SK-N-SH (cell line): ENCODE measurements at regions of chr2 and their contacts with region 1.

Region 1: DNA sequence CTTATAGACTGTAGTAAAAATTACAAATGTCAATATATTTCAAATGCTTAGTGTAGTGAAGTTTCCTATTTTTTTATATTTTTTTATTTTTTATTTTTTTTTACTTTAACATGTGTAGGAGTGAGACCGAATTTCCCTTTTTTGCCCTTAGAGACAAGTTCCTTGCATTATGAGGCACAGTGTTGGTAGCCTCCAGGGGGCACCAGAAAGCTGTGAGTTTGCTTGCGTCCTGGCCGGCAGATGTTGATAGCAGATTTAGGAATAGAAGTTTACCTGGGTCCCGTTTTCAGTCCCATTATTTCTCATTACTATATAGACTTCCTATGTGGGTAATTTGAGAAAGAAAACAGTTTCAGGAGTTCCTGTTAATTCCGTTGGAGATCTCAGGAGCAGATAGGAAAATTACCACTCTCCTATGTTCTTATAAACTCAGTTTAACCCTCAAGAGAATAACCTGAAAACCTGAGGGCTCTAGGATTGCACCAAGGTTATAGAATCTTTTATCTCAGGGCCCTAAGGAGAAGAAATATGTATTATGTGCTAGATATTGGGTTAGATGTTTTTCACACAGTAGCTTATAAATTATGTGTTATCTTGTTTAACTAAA is 157.5 kb upstream of the SESTD1 start:
- DNase-seq: peak; percentile 40
- H3K4me3 ChIP-seq: no peak overlapping the region
- H3K27ac ChIP-seq: no peak overlapping the region
- H3K4me1 ChIP-seq: no peaks in the 10 kb centered on the region
- H3K27me3 ChIP-seq: no peaks in the 10 kb centered on the region
- CTCF ChIP-seq: peak; percentile 79
- EP300 ChIP-seq: no peak
- RAD21 ChIP-seq: peak; percentile 90

Region 2: DNA sequence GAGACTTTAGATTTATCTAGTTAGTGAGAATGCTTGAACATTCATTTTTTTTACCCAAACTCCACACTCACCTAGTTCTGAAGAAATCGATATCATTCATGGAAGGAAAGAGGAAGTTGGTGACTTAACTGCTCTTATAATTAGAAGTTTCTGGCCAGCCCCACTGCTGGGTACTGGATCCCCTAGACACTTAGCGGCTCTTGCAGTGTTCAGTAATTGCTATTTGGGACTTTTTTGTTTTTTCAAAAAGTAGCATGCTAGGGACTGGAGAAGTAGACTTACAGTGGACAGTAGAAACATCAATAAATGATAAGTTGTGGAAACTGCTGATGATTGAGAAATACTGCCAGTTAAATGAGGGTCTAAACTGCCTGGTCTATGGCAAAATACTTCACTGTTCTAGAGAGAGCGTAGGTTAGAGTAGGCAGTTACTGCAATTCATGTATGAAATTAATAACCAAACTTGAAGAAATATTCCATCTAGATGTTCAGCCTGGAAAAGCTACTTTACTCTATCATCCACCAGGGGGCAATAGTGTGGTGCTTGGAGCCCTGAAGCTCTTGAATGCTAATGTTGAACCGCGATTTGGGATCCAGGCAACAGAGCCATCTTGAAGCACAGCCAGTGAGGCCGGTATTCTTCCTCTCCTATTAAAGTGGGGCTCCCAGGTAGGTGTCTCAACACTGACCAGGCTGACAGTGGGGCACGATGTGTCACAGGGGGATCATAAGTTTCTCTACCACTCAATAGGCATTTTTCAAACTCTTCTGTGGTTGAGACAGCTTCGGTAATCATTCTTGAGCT is 11.4 kb before region 1 on chr2:
- CTCF ChIA-PET with region 1: interaction called, 18 read pairs
- POLR2A ChIA-PET with region 1: no interaction called
- DNase-seq: peak; percentile 48
- H3K4me3 ChIP-seq: peak overlapping the region in 1 of 2 experiments; percentile 25; a peak in 1 of 4 replicates
- H3K27ac ChIP-seq: no peak overlapping the region
- H3K4me1 ChIP-seq: no peaks in the 10 kb centered on the region; a peak in 1 of 4 replicates
- H3K27me3 ChIP-seq: no peaks in the 10 kb centered on the region
- CTCF ChIP-seq: peak; percentile 85
- EP300 ChIP-seq: no peak
- RAD21 ChIP-seq: peak; percentile 79

Region 3: DNA sequence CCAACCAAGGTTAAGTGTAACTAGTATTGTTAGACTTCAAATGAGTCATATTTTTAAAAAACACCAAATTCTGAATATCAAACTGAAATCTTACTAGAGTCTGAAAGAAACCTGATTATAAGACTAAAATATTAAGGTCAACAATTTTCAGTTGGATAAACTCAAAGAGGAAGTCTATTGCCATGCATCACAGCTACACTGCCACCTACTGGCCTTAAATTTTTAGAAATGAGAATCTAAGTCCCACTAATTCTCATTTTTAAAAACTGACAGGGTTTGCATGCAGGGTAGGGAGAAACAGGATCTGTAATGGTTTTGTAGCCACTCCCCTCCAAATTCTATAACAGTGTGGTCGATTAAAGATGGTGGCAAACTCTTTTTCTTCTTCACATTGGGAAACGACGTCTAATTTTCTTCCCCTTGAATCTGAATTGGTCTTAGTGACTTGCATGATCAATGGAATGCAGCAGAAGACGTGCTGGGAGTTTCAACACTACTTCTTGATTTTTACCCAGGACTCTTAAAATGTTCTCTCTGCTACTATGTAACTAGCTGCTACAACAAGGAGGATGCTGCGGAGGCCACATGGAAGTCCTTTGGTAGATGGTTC is 18.6 kb after region 1 on chr2:
- CTCF ChIA-PET with region 1: interaction called, 17 read pairs
- POLR2A ChIA-PET with region 1: no interaction called
- DNase-seq: peak; percentile 25
- H3K4me3 ChIP-seq: no peak overlapping the region; a peak in 1 of 4 replicates
- H3K27ac ChIP-seq: no peak overlapping the region
- H3K4me1 ChIP-seq: no peaks in the 10 kb centered on the region; a peak in 1 of 4 replicates
- H3K27me3 ChIP-seq: no peaks in the 10 kb centered on the region
- CTCF ChIP-seq: peak; percentile 64
- EP300 ChIP-seq: no peak
- RAD21 ChIP-seq: peak; percentile 55

Region 4: DNA sequence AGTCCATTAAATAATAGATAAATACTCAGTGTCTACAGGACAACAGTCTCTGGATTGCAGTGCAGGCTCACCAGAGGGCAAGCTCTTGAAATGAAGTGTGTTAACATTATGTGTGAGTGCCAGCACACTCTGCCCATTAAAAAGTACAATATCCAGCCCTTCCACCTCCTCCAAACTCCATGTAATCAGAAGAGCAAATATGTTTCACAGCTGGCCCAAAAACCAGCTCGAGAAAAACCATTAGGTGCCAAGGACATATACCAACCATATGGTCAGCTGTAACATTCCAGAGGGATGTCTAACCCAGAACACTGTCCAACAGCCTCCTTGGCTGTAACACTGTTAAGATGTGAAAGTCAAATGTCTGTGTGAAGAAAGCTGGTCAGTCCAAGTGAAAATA is 327.1 kb after region 1 on chr2:
- CTCF ChIA-PET with region 1: interaction called, 11 read pairs
- POLR2A ChIA-PET with region 1: no interaction called
- DNase-seq: no peak
- H3K4me3 ChIP-seq: no peak overlapping the region
- H3K27ac ChIP-seq: no peak overlapping the region
- H3K4me1 ChIP-seq: no peaks in the 10 kb centered on the region
- H3K27me3 ChIP-seq: no peaks in the 10 kb centered on the region
- CTCF ChIP-seq: no peak
- EP300 ChIP-seq: peak in 1 of 2 experiments; percentile 27; a peak in 1 of 4 replicates
- RAD21 ChIP-seq: no peak